Activated CD4-positive, alpha-beta T cell treated with anti-CD3 and anti-CD28 coated beads for 36 hours (primary cell): ENCODE measurements at regions of chr2 and their contacts with region 1.

Region 1: DNA sequence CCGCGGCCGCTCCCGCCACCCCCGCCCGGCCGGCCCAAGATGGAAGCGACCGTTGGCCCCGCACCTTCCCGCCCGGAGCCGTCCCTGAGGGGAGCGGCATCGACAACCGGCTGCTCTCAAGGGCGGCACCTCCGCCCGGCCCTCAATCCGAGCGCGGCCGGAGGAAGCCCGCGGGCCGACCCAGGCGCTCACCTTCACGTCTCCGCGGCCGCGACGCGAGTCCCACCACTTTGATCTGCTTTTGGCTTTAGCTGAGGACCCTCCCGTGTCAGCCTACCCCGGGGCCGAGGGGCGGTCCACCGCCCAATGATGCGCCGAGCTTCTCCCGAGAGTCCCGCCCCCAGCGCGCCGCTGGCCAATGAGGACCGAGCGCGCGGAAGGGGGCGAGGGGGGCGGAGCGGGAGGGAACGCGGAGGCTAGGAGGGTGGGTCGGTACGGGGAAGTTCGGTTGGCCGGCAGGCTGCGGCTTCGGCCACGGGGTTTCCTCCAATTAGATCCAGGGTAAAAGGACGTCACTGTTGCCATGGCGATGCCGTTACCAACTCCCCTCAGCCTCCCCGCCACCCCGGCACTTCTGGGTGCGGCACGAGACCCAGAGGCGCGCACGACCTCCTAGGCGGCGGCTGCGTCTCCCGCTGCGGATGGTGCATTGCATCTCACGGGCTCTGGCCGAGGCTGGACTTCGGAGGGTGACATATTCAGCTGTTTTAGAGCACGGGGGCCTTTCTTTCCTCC is at the start of gene YWHAQ:
- DNase-seq: peak; percentile 97
- ATAC-seq: peak; percentile 89
- H3K4me3 Mint-ChIP-seq: peak within 1 kb of the TSS; percentile 99
- H3K27ac Mint-ChIP-seq: peak within 1 kb of the TSS; percentile 95
- H3K4me1 Mint-ChIP-seq: peaks cover 45% of the 10 kb centered on the region
- H3K27me3 Mint-ChIP-seq: no peaks in the 10 kb centered on the region
- total RNA-seq, gene YWHAQ: 370 to 508 TPM

Region 2: DNA sequence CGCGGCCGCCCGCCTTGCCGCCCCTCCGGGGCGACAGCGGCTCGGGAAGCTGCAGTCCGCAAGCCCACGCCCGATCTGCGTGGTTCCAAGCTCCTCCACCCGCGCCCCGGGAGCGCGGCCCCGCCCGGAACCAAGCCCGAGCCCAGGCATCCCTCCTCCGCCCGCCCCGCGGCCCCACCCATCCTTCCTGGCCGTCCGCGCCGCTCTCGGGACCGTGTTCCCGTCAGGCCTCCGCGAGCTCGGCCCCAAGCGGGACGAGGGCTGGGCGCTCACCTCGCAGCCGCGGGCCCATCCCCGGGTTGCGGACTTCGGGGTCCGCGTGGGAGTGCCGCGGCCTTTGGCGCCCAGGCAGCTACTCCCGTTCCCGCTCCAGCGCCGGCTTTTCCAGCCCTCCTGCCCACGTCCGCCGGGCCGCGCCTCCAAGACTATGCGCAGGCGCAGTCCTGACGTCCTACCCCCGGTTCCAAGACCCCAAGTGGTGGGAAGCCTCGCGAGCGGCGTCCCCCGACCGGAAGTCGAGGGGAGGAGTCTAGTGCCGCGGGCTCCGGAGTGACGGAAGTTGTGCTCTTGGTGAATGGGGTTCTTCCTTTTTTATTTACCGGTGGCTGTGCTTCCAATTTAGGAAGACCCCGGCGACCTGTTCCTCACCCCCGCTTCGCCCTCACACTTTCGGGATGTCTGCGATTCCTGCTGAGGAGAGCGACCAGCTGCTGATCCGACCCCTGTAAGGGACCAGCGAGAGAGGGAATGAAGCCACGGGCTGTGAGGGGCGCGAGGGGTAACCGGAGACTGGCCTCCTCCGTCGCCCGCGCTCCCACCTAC is 207.6 kb before region 1 on chr2 and contains the starts of genes CPSF3 and ITGB1BP1:
- CTCF ChIA-PET with region 1: no interaction called
- POLR2A ChIA-PET with region 1: no interaction called
- intact Hi-C with region 1: loop called in 1 of 2 experiments (anchors 1 kb)
- DNase-seq: peak; percentile 99
- ATAC-seq: peak; percentile 89
- H3K4me3 Mint-ChIP-seq: no peak within 1 kb of the TSS
- H3K27ac Mint-ChIP-seq: peak within 1 kb of the TSS; percentile 94
- H3K4me1 Mint-ChIP-seq: peaks cover 36% of the 10 kb centered on the region
- H3K27me3 Mint-ChIP-seq: no peaks in the 10 kb centered on the region
- total RNA-seq, gene CPSF3: 72.3 to 103 TPM
- total RNA-seq, gene ITGB1BP1: 89.7 to 92.1 TPM

Region 3: GRCh38 chr2:9613291-9613690 is 17.6 kb before region 1 on chr2:
- CTCF ChIA-PET with region 1: no interaction called
- POLR2A ChIA-PET with region 1: interaction called, 3 read pairs
- intact Hi-C with region 1: loop called in 1 of 2 experiments (anchors 1 kb)
- DNase-seq: no peak
- ATAC-seq: no peak
- H3K4me3 Mint-ChIP-seq: no peak overlapping the region
- H3K27ac Mint-ChIP-seq: peak overlapping the region; percentile 27
- H3K4me1 Mint-ChIP-seq: peaks cover 95% of the 10 kb centered on the region
- H3K27me3 Mint-ChIP-seq: no peaks in the 10 kb centered on the region

Region 4: DNA sequence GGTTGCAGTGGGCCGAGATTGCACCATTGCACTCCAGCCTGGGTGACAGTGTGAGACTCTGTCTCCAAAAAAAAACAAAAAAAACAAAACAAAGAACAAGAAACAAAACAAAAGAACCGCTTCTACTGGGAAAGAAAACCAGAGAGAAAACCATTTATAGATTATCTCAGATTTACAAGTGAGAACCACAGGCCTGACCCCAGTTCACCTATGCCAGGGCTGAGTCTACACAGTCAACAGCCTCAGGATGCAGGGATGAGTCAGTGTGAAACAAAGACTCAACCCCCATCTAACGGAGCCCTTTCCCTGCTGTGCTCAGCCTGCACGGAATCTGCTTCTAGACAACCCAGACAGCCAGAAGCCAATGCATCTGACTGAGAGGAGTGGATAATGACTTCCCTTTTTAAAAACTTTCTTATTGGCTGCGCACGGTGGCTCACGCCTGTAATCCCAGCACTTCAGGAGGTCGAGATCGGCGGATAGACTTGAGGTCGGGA is 25.4 kb after region 1 on chr2:
- CTCF ChIA-PET with region 1: interaction called, 5 read pairs
- POLR2A ChIA-PET with region 1: interaction called, 8 read pairs
- intact Hi-C with region 1: loop called (anchors 1 kb)
- DNase-seq: peak; percentile 86
- ATAC-seq: peak; percentile 87
- H3K4me3 Mint-ChIP-seq: peak overlapping the region; percentile 26
- H3K27ac Mint-ChIP-seq: peak overlapping the region; percentile 89
- H3K4me1 Mint-ChIP-seq: peaks cover 37% of the 10 kb centered on the region
- H3K27me3 Mint-ChIP-seq: peaks cover 10% of the 10 kb centered on the region

Region 5: GRCh38 chr2:9753276-9753600 is 122.3 kb after region 1 on chr2:
- CTCF ChIA-PET with region 1: no interaction called
- POLR2A ChIA-PET with region 1: interaction called, 3 read pairs
- intact Hi-C with region 1: loop called (anchors 1 to 2 kb)
- DNase-seq: peak; percentile 84
- ATAC-seq: peak; percentile 84
- H3K4me3 Mint-ChIP-seq: peak overlapping the region; percentile 66
- H3K27ac Mint-ChIP-seq: peak overlapping the region; percentile 96
- H3K4me1 Mint-ChIP-seq: peaks cover 61% of the 10 kb centered on the region
- H3K27me3 Mint-ChIP-seq: peaks cover 18% of the 10 kb centered on the region

Region 6: DNA sequence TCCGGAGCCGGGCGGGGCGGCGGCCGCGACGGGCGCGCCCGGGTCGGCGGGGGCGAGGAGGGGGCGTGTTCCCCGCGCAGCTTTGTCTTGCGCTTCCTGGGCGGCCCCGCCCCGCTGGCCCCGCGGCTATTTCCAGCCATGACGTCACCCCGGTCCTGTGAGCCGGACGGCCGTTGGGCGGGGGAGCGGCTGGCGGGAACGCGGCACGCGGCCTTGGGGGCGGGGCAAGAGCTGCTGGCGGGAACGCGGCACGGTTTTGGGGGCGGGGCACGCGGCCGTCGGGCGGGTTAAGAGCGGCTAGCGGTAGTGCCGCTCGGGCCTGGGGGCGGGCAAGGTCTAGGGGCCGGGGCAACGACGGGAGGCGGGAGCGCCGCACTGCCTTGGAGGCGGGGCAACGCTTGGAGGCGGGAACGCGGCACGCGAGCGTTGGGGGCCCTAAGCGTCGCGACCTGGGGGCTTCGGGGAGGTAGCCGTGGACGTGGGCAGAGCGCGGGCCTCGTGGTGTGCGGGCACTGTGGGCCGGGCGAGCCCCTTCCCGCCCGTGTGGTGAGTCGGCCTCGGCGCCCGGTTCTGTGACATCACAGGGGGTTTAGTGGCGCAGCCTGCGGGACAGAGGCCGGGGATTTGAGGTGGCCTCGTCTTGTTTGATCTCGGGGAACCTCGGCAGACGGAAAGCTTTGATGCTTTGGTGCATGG is 413.1 kb after region 1 on chr2:
- CTCF ChIA-PET with region 1: no interaction called
- POLR2A ChIA-PET with region 1: no interaction called
- intact Hi-C with region 1: loop called in 1 of 2 experiments (anchors 2 kb)
- DNase-seq: peak; percentile 95
- ATAC-seq: peak; percentile 81
- H3K4me3 Mint-ChIP-seq: peak overlapping the region; percentile 66
- H3K27ac Mint-ChIP-seq: peak overlapping the region; percentile 78
- H3K4me1 Mint-ChIP-seq: peaks cover 12% of the 10 kb centered on the region
- H3K27me3 Mint-ChIP-seq: peaks cover 3% of the 10 kb centered on the region